Gastrocnemius medialis (tissue), 4 donors: ENCODE measurements at regions of chr13 and their contacts with region 1.

Region 1: GRCh38 chr13:21060987-21061763 is at the start of gene LATS2:
- DNase-seq: peak; percentile 93 to 96
- ATAC-seq: peak; percentile 87 to 88
- H3K4me3 ChIP-seq: peak within 1 kb of the TSS; percentile 69 to 95 (median 92)
- H3K27ac ChIP-seq: peak within 1 kb of the TSS; percentile 87 to 100 (median 100)
- H3K4me1 ChIP-seq: peaks cover 43 to 45% of the 10 kb centered on the region in 2 donors
- H3K27me3 ChIP-seq: no peaks in the 10 kb centered on the region
- CTCF ChIP-seq: peak in 3 of 5 experiments; percentile 59 to 69 (median 59)
- POLR2A ChIP-seq: peak; percentile 79 to 91
- total RNA-seq, gene LATS2: 11.5 to 34.1 (median 18.8) TPM

Region 2: GRCh38 chr13:20703780-20704445 is 357.3 kb before region 1 on chr13:
- in situ Hi-C with region 1: no loop called
- intact Hi-C with region 1: loop called (anchors 5 kb)
- DNase-seq: peak in 1 of 2 donors; percentile 65
- ATAC-seq: peak; percentile 64 to 79
- H3K4me3 ChIP-seq: peak overlapping the region in 3 of 4 donors; percentile 23 to 71 (median 54)
- H3K27ac ChIP-seq: peak overlapping the region; percentile 22 to 77 (median 58)
- H3K4me1 ChIP-seq: peaks cover 12 to 14% of the 10 kb centered on the region in 2 donors
- H3K27me3 ChIP-seq: no peaks in the 10 kb centered on the region
- CTCF ChIP-seq: peak in 4 of 5 experiments; percentile 63 to 81 (median 78)
- POLR2A ChIP-seq: peak; percentile 44 to 68

Region 3: GRCh38 chr13:20828539-20829364 is 232.4 kb before region 1 on chr13:
- in situ Hi-C with region 1: no loop called
- intact Hi-C with region 1: loop called (anchors 10 kb)
- DNase-seq: no peak
- ATAC-seq: peak; percentile 33 to 50
- H3K4me3 ChIP-seq: peak overlapping the region; percentile 35 to 63 (median 49)
- H3K27ac ChIP-seq: peak overlapping the region; percentile 87 to 93 (median 88)
- H3K4me1 ChIP-seq: peaks cover 73 to 79% of the 10 kb centered on the region in 2 donors
- H3K27me3 ChIP-seq: no peaks in the 10 kb centered on the region
- CTCF ChIP-seq: peak; percentile 78 to 85 (median 84)
- POLR2A ChIP-seq: no peak

Region 4: DNA sequence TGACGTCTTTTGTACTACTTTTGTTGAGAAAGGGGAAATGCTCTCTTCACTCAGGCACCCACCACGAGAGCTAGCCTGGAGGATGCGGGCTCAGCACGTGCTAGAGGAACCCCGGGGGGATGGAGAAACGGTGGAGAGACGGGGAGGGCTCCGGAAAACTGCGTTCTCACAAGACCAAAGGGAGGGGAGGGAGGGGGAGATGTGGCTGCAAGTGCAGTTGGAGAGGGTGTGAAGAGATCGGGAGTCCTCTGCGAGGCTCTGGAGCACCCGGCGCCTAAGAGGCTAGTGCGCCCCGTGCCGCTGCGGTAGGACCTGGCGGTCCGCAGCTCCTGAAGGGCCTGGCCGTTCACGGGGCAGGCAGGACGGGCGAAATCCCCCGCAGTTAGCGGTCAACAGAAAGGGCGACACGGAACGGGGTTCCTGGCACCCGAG is 115.2 kb before region 1 on chr13:
- in situ Hi-C with region 1: loop called in 2 of 4 experiments (anchors 5 to 10 kb)
- intact Hi-C with region 1: loop called (anchors 1 kb)
- DNase-seq: no peak
- ATAC-seq: no peak
- H3K4me3 ChIP-seq: peak overlapping the region in 2 of 4 donors; percentile 22 to 39
- H3K27ac ChIP-seq: no peak overlapping the region
- H3K4me1 ChIP-seq: peaks cover 0 to 7% of the 10 kb centered on the region in 2 donors
- H3K27me3 ChIP-seq: peaks cover 3 to 10% (median 5%) of the 10 kb centered on the region in 3 donors
- CTCF ChIP-seq: no peak
- POLR2A ChIP-seq: no peak

Region 5: GRCh38 chr13:21014502-21015170 is 46.5 kb before region 1 on chr13:
- in situ Hi-C with region 1: no loop called
- intact Hi-C with region 1: loop called (anchors 5 kb)
- DNase-seq: peak; percentile 78 to 90
- ATAC-seq: peak; percentile 82
- H3K4me3 ChIP-seq: no peak overlapping the region
- H3K27ac ChIP-seq: peak overlapping the region; percentile 86 to 91 (median 88)
- H3K4me1 ChIP-seq: peaks cover 84 to 91% of the 10 kb centered on the region in 2 donors
- H3K27me3 ChIP-seq: no peaks in the 10 kb centered on the region
- CTCF ChIP-seq: no peak
- POLR2A ChIP-seq: peak in 1 of 2 donors; percentile 31

Region 6: DNA sequence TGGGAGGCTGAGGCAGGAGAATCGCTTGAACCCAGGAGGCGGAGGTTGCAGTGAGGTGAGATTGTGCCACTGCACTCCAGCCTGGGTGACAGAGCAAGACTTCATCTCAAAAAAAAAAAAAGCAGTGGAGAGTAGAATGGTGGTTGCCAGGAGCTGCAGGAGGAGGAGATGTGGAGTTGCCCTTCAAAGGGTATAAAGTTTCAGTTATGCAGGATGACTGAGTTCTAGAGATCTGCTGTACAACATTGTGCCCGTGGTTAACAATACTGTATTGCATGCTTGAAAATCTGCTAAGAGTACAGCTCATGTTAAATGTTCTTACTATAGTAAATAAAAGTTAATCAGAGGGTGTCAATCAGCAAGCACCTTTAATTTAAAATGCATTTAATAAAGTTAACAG is 28.7 kb after region 1 on chr13:
- in situ Hi-C with region 1: no loop called
- intact Hi-C with region 1: no loop called
- DNase-seq: no peak
- ATAC-seq: no peak
- H3K4me3 ChIP-seq: no peak overlapping the region
- H3K27ac ChIP-seq: no peak overlapping the region
- H3K4me1 ChIP-seq: no peaks in the 10 kb centered on the region
- H3K27me3 ChIP-seq: no peaks in the 10 kb centered on the region
- CTCF ChIP-seq: no peak
- POLR2A ChIP-seq: no peak

Region 7: GRCh38 chr13:21124852-21125251 is 63.7 kb after region 1 on chr13:
- in situ Hi-C with region 1: no loop called
- intact Hi-C with region 1: no loop called
- DNase-seq: no peak
- ATAC-seq: no peak
- H3K4me3 ChIP-seq: no peak overlapping the region
- H3K27ac ChIP-seq: no peak overlapping the region
- H3K4me1 ChIP-seq: no peaks in the 10 kb centered on the region
- H3K27me3 ChIP-seq: no peaks in the 10 kb centered on the region
- CTCF ChIP-seq: no peak
- POLR2A ChIP-seq: no peak

Region 8: GRCh38 chr13:21181671-21182070 is 120.5 kb after region 1 on chr13:
- in situ Hi-C with region 1: no loop called
- intact Hi-C with region 1: no loop called
- DNase-seq: no peak
- ATAC-seq: no peak
- H3K4me3 ChIP-seq: no peak overlapping the region
- H3K27ac ChIP-seq: no peak overlapping the region
- H3K4me1 ChIP-seq: peaks cover 12 to 15% of the 10 kb centered on the region in 2 donors
- H3K27me3 ChIP-seq: no peaks in the 10 kb centered on the region
- CTCF ChIP-seq: no peak
- POLR2A ChIP-seq: no peak